Sciatic nerve (tissue), 2 donors: ENCODE measurements at regions of chr19 and their contacts with region 1.

Region 1: DNA sequence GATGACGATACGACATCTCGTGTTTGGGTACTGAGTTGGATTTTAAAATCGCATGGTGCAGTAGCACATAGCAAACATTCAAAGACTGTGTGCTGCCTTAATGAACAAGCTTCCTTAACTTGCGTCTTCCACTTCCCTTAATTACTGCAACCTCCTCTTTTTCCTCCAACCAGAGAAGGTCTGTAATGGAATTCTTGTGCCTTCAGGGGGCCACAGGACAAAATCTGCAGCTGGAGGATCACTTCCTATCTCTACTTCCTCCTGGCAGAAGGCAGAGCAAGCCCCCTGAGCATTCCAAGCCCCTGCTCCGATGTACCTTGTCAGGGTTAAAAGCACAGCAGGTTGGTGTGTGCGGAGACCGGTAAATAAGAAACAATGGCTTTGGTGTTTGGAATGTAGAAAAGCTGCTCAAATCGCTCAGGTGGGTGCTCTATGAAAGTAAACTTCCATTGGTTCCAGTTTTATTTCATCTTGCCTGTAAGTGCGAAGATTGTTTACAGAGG is 151.3 kb upstream of the UQCRFS1 start:
- DNase-seq: no peak
- ATAC-seq: no peak

Region 2: GRCh38 chr19:28569132-28570131 is 794.8 kb before region 1 on chr19:
- intact Hi-C with region 1: no loop called
- DNase-seq: no peak
- ATAC-seq: no peak

Region 3: DNA sequence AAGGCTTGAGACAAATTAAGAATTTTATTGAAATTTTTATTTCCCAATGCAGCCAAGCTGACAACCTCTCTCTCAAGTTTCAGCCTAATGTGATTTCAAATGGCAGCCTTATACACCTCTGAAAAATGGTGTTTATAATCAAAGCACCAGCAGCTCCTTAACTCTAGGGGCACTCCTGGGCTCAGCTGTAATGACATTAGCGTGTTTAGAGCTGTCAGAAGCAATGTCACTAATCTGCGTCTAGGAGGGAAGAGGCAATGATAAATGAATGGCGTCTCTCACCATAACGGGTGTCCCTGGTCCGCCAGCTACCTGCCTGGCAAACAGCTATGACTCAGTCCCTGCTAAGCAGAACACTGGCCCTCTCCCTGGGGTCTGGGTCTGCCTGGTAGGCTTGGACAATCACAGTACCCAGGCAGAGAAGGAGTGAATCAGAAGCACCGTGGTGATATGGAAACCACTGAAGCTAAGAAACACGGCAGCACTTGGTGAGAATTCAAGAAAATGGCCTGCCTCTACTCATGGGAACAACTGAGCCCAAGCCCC is 29.7 kb after region 1 on chr19:
- intact Hi-C with region 1: no loop called
- DNase-seq: no peak
- ATAC-seq: no peak

Region 4: DNA sequence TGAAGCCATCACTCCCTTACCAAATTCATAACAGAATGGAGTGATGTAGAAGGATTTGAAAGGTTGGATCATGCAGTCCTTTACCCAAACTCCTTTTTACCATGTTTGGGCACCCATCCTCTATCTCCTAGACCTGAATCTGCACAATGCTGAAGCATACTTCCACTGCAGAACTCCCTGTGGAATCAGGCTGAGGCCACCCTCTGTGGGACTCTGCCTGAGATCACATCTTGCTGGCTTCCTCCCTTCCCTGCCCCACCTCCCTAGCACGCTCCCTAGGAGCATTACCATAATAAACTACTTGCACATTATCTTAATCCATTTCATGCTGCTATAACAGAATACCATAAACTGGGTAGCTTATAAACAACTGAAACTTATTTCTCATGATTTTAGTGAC is 93.1 kb after region 1 on chr19:
- intact Hi-C with region 1: loop called (anchors 5 kb)
- DNase-seq: no peak
- ATAC-seq: no peak